ENCODE measurements at regions of chr18 and their contacts with region 1.

Region 1: DNA sequence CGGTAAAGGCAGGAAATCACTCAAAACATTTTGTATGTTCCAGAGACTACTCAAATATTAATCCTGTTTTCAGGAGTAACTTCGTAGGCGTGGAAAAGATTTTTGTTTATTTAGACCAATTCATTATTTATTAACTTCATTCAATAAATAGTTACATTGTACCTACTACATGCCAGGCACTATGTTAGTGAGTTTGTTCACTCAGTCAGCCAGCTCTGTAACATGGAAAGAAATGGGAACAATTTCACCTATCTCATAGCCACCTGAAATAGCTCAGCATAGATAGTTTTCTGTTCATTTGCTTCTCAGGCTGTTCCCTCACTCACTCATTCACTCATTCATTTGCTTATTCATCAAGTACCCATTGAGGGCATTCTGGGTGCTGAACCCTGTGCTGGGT is 34.6 kb downstream of the TTC39C start:
- DNase-seq: no peak
- H3K4me3 ChIP-seq: no peak overlapping the region
- H3K27ac ChIP-seq: no peak overlapping the region
- H3K4me1 ChIP-seq: peaks cover 9% of the 10 kb centered on the region
- H3K27me3 ChIP-seq: no peaks in the 10 kb centered on the region
- CTCF ChIP-seq: no peak

Region 2: DNA sequence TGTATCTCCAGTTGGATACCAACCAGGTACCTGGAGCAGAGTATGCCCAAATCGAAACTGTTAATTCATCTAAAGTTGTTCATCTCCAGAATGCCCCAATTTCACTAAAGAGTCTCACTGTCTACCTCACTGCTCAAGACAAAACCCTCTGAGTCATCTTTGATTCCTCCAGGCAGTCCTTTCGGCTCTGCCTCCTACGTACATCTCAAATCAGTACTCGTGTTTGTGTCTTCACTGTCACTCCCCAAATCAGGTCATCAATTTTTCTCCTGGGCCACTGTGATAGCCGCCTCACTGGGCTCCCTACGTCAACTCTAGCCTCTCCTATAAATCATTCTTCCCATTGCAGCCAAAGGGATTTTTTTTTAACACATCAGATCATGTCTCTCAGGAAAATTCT is 76.7 kb before region 1 on chr18:
- CTCF ChIA-PET with region 1: no interaction called
- POLR2A ChIA-PET with region 1: no interaction called
- intact Hi-C with region 1: no loop called
- DNase-seq: no peak
- H3K4me3 ChIP-seq: no peak overlapping the region
- H3K27ac ChIP-seq: no peak overlapping the region
- H3K4me1 ChIP-seq: peaks cover 5% of the 10 kb centered on the region
- H3K27me3 ChIP-seq: no peaks in the 10 kb centered on the region
- CTCF ChIP-seq: no peak

Region 3: DNA sequence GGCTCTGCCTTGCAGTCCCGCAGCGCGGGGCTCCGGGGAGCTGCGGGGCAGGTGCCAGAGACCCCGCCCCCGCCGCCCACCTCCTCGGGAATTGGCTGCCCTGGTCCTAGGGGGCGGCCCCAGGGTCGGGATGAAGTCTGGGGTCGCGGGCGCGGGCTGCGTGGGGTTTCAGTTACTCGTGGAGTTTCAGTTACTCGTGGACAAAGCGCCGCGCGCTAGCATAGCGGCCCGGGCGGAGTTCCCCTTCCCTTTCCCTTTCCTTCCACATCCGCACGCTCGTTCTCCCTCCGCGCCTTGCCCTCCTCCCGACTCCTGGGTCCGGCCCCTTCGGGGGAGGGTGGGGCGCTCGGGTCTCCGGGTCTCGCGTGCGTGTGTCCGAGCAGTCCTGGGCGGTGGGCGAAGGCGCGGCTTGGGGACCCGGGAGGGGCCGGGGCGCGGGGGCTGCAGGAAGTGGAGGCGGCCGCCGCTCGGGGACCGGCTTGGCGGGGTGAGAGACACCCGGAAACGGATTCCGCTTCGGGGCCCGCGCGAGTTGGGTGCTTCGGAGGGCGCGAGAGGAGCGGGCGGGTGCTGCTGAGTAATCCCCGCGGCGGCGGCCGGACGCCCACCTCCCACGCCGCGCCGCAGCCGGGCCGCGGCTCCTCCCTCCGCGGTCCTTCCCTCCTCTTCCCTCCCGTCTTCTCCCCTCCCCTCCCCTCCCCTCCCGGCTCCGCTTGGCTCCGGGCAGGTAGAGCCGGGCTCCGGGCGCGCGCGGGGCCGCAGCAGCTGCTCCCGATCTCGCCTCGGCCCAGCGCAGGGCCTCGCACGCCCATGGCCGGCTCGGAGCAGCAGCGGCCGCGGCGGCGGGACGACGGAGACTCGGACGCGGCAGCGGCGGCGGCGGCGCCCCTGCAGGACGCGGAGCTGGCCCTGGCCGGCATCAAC is 34.8 kb before region 1 on chr18 and contains the start of gene TTC39C:
- CTCF ChIA-PET with region 1: no interaction called
- POLR2A ChIA-PET with region 1: no interaction called
- intact Hi-C with region 1: no loop called
- DNase-seq: peak; percentile 76
- H3K4me3 ChIP-seq: peak within 1 kb of the TSS; percentile 89
- H3K27ac ChIP-seq: peak within 1 kb of the TSS; percentile 78
- H3K4me1 ChIP-seq: peaks cover 15% of the 10 kb centered on the region
- H3K27me3 ChIP-seq: no peaks in the 10 kb centered on the region
- CTCF ChIP-seq: no peak
- total RNA-seq, gene TTC39C: 20.7 and 24.0 TPM in 2 replicates

Region 4: GRCh38 chr18:24095976-24096375 is 46.8 kb after region 1 on chr18:
- CTCF ChIA-PET with region 1: no interaction called
- POLR2A ChIA-PET with region 1: no interaction called
- intact Hi-C with region 1: loop called (anchors 5 kb)
- DNase-seq: no peak
- H3K4me3 ChIP-seq: no peak overlapping the region
- H3K27ac ChIP-seq: no peak overlapping the region
- H3K4me1 ChIP-seq: no peaks in the 10 kb centered on the region
- H3K27me3 ChIP-seq: no peaks in the 10 kb centered on the region
- CTCF ChIP-seq: no peak